ENCODE measurements at regions of chr14 and their contacts with region 1.

Region 1: DNA sequence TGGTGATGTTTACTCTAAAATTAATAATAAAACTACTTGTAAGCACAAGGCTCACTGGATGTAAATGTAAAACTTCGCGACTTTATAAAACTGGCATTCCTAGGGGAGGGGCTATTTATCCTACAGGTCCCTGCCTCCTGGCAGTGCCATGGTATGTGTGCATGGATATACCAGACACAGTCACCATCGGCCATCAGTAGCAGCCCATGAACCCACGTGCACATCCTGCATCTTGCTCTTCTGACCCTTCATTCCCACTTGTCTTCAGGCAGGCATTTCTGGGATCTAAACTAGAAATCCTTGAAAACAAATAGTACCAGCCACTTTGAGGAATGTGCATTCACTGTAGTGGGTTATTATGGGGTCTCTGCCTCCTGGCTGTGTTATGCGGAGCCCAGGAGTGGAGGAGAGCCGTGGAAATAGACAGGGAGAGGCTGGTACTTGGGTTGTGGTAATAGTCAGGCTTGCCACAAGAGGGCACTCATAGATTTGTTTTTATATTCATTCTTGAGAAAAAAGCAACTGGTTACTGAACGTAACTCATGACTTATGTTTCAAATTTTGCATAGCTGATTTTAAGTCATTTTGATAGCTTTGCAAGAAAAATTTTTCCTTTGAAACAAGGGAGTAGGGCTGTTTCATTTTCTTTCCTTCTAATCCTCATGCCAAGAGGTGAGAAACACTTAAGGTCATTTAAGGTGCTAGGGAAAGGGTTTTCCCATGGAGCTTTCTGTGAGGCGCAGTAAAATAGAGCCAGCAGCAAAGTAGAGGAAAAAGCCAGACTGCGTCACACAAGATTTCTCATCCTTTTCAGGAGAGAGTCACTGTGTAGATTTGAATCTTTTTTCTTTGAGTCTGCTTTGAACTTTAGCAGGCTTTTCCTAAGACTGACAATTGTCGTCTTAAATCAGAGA is 17.4 kb upstream of the GALNT16 start:
- DNase-seq: peak in 2 of 4 donors; percentile 62 to 72
- ATAC-seq: peak; percentile 94
- H3K4me3 ChIP-seq: no peak overlapping the region
- H3K27ac ChIP-seq: no peak overlapping the region
- H3K4me1 ChIP-seq: peaks cover 0 to 2% of the 10 kb centered on the region in 2 donors
- H3K27me3 ChIP-seq: no peaks in the 10 kb centered on the region
- CTCF ChIP-seq: peak; percentile 76 to 78

Region 2: DNA sequence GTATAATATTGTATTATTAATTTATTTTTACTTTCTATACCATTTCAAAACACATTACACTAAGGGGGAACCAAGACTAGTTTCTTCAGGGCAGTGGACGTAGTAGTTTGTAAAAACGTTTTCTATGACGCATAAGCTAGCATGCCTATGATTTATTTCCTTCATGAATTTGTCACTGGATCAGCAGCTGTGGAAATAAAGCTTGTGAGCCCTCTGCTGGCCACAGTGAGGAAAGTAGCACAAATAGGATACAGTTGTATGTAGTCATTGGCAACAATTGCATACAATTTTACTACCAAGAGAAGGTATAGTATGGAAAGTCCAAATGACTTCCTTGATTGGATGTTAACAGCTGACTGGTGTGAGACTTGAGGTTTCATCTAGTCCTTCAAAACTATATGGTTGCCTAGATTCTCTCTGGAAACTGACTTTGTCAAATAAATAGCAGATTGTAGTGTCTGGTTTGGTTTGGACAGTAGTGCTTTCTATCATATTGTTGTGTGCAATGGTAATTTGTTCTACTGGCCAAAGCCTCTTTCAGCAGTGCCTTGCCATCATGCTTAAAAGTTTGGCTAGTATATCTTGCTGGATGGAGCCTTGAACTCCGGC is 217.6 kb after region 1 on chr14:
- intact Hi-C with region 1: loop called in 1 of 2 experiments (anchors 5 kb)
- DNase-seq: peak in 3 of 4 donors; percentile 39 to 81 (median 57)
- ATAC-seq: peak; percentile 90
- H3K4me3 ChIP-seq: no peak overlapping the region
- H3K27ac ChIP-seq: no peak overlapping the region
- H3K4me1 ChIP-seq: peaks cover 0 to 5% of the 10 kb centered on the region in 2 donors
- H3K27me3 ChIP-seq: no peaks in the 10 kb centered on the region
- CTCF ChIP-seq: peak; percentile 73 to 74

Region 3: DNA sequence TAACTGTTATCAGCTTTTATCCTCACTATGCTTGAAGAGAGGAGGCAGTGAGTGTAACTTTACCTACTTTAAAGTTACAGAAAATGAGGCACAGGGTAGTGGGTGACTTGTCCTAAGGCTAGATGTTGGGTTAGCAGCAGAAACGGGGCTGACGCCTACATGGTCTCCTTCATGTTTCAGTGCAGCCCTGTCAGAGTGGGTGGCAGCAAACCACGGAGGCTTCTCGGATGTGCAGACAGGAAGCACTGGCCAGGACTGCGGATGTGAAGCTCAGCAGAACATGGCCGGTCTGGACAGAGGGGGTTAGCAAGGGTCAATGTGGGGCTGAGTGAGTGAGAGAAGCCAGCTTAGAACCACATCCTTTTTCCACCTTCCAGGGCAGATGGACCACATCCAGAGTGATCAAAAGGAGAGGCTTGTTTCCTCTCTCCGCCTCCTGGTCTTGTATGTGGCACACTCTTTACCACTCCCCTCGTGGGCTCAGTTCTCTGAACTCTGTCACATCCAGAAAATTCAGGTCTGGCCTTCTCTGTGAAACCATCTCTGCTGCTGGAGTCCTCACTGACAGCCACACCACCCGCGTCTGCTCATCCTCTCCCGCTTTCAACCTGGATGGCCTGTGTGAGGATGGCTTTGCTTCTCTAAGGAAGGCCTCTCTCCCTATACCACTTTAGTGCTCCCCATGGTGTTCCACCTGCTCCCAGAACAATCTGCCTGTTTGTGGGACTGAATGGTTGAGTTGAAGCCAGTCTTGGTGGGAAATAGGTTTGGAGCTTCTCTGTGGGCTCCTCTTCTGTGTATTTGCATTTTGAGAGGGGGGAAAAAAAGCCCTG is 382.9 kb after region 1 on chr14:
- intact Hi-C with region 1: no loop called
- DNase-seq: peak in 2 of 4 donors; percentile 81 to 83
- ATAC-seq: peak; percentile 87
- H3K4me3 ChIP-seq: no peak overlapping the region
- H3K27ac ChIP-seq: peak overlapping the region; percentile 11 to 71
- H3K4me1 ChIP-seq: peaks cover 33 to 94% of the 10 kb centered on the region in 2 donors
- H3K27me3 ChIP-seq: no peaks in the 10 kb centered on the region
- CTCF ChIP-seq: no peak

Measured in left lung (tissue), 14 donors.